Activated CD4-positive, alpha-beta T cell treated with anti-CD3 and anti-CD28 coated beads, Interleukin-2, amount 10 ng/mL, durations not matched to agents 7 days and 5 days (primary cell): ENCODE measurements at regions of chr2 and their contacts with region 1.

Region 1: DNA sequence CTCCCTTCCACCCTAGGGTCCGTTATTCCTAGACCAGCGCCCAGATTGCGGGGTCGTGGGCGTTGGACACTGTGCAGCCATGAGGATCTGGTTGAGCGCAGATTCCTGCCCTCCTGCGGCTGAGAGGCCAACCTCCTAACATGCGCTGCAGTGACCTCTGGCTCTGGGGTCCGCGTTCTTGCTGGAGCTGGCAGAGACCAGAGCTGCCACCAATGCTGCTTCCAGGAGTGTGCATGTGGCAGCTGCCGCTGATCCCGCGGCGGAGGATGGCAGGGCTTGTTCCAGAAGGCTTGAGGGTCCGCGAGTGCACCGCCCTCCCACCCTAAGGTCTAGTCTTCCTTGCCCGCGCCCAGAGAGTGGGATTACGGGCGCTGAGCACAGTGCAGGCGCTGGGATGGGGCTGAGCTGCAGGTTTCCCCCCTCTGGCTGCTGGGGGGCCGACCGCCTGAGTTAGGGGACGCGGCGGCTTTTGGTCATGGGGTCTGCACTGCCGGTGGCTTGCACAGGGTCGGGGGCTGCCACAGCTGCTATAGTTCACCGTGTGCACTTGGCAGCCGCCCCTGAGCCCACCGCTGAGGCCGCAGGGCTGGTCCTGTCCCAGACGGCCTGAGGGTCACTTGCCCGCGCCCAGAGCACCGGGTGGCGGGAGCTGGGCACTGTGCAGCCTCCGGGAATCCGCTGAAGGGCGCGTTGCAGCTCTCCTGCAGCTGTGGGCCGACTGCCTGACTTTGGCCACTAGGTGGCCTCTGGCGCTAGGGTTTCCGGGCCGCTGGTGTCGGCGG is 145.9 kb downstream of the CCDC74A start:
- DNase-seq: peak; percentile 51
- H3K4me3 Mint-ChIP-seq: no peak overlapping the region
- H3K27ac Mint-ChIP-seq: no peak overlapping the region
- H3K4me1 Mint-ChIP-seq: peaks cover 18% of the 10 kb centered on the region
- H3K27me3 Mint-ChIP-seq: peaks cover 37% of the 10 kb centered on the region

Region 2: DNA sequence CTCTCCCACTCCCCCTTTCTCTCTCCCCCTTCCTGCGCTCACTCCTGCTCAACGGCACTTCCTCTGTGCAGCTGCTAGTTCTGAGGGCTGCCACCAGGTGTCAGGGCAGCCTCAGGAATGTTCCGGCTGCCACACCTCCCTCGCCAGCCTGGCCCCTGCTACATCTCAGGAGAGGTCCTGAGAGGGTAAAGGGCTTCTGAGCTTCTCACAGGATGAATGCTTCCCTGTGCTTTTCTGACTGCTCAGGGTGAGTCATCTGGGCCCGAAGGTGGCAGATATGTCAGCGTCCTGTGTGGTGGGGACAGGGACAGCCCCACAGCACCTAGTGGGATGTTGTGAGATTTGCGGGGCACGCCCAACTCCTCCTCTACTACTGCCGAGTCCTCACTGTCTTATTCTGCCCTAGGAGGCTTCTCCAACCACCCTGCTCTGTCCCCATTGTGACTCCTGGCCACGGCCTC is 519.5 kb before region 1 on chr2:
- CTCF ChIA-PET with region 1: interaction called, 10 read pairs
- POLR2A ChIA-PET with region 1: no interaction called
- DNase-seq: peak; percentile 66
- H3K4me3 Mint-ChIP-seq: no peak overlapping the region
- H3K27ac Mint-ChIP-seq: peak overlapping the region; percentile 33
- H3K4me1 Mint-ChIP-seq: peaks cover 33% of the 10 kb centered on the region
- H3K27me3 Mint-ChIP-seq: no peaks in the 10 kb centered on the region

Region 3: DNA sequence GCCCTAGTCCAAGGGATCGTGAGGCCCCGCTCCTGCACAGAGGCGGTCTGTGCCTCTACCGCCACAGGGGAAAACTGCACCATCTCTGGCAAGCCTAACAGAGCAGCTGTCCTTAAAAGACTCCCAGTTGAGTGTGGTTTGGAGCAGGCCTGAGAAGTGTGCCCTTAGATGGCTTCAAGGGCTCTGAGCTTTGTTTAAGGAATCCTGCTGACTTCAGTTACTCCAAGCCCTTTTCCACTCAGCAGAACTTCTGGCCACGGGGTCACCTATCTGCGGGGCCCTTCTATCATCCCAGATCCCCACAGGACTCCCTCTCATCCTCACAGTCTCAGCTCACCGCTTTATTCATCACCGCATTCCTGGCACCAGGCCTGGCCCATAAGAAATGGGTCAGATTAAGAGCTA is 14.4 kb before region 1 on chr2:
- CTCF ChIA-PET with region 1: no interaction called
- POLR2A ChIA-PET with region 1: no interaction called
- DNase-seq: no peak
- H3K4me3 Mint-ChIP-seq: no peak overlapping the region
- H3K27ac Mint-ChIP-seq: no peak overlapping the region
- H3K4me1 Mint-ChIP-seq: no peaks in the 10 kb centered on the region
- H3K27me3 Mint-ChIP-seq: peaks cover 23% of the 10 kb centered on the region